Pancreas (tissue), 10 donors: ENCODE measurements at regions of chr10 and their contacts with region 1.

Region 1: DNA sequence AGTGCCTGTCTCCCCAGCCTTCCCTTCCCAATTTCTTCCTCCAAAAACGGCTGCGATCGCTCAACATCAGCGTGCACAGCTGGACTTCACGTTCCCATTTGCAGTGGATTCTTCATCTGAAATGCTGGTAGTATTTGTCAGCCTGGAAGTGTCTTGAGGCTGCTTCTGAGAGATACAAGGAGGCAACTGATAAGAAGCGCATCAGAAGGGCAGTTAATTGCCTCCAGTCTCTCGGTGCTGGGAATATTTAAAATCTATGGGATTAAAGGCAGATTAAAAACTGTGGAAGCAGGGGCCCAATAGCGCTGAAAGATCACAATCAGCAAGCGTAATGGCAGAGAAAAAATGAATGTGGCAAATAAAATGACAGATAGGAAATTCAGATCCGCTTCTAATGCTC is 450.0 kb downstream of the GATA3 start:
- DNase-seq: no peak
- ATAC-seq: no peak
- H3K4me3 ChIP-seq: no peak overlapping the region
- H3K27ac ChIP-seq: no peak overlapping the region
- H3K4me1 ChIP-seq: no peaks in the 10 kb centered on the region
- H3K27me3 ChIP-seq: peaks cover 0 to 4% (median 0%) of the 10 kb centered on the region in 4 donors
- CTCF ChIP-seq: no peak

Region 2: GRCh38 chr10:8596929-8597472 is 92.5 kb after region 1 on chr10:
- intact Hi-C with region 1: loop called in 1 of 3 experiments (anchors 10 kb)
- DNase-seq: no peak
- ATAC-seq: no peak
- H3K4me3 ChIP-seq: no peak overlapping the region
- H3K27ac ChIP-seq: no peak overlapping the region
- H3K4me1 ChIP-seq: no peaks in the 10 kb centered on the region
- H3K27me3 ChIP-seq: peaks cover 0 to 3% (median 0%) of the 10 kb centered on the region in 4 donors
- CTCF ChIP-seq: no peak